Psoas muscle (tissue), 8 donors: ENCODE measurements at regions of chr5 and their contacts with region 1.

Region 1: DNA sequence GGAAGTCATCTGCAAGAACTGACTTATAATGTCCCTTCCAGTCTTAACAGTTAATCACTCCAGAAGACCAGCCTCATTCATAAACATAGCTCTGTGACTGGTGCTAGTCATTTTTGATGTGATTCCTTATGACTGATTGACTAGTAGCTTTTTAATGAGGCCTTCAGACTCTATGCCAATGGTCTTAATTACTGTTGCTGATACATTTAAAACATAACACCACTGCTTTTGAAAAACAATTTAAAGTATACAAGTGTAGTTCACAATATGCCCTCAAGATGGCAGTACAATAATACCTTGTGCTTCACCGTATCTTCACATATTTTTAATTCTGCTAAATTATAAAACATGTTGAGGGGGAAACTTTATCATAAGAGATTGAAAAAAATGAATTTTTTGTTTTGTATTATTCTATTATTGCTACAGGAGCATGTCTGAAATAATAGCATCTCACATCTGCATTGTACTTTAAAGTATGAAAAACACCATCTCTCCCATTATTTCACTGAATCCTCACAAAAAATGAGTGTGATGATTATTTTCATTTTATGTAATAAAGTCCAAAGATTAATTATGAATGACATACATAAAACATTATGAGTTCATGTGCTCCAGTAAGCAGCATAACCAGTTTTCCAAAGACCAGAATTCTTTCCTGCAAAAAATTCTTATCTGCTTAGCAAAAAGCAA is 55.2 kb upstream of the SHISAL2B start:
- DNase-seq: no peak
- ATAC-seq: peak in 2 of 4 donors; percentile 49 to 59
- H3K4me3 ChIP-seq: no peak overlapping the region
- H3K27ac ChIP-seq: no peak overlapping the region
- H3K4me1 ChIP-seq: no peaks in the 10 kb centered on the region
- H3K27me3 ChIP-seq: peaks cover 0 to 3% (median 0%) of the 10 kb centered on the region in 3 donors
- CTCF ChIP-seq: peak; percentile 89

Region 2: DNA sequence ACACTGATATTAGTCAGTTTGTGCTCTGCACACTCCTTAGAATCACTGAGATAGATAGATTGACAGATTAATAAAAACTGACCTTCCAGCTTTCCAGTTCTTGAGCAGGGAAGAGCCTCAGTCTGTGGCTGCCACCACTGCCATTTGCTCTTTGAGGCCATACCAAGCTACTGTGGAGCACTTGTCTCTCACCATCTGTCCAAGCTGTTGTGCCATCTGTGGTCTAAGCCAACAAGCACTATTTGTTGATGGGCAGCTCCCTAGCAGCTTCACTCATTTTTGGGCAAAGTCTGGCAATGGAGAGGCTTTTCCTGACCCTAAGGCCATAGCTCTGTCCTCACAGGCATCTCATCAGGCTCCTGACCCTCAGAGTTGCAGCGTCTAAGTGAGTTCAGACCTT is 703.3 kb before region 1 on chr5:
- intact Hi-C with region 1: no loop called
- DNase-seq: no peak
- ATAC-seq: no peak
- H3K4me3 ChIP-seq: no peak overlapping the region
- H3K27ac ChIP-seq: no peak overlapping the region
- H3K4me1 ChIP-seq: no peaks in the 10 kb centered on the region
- H3K27me3 ChIP-seq: no peaks in the 10 kb centered on the region
- CTCF ChIP-seq: no peak

Region 3: DNA sequence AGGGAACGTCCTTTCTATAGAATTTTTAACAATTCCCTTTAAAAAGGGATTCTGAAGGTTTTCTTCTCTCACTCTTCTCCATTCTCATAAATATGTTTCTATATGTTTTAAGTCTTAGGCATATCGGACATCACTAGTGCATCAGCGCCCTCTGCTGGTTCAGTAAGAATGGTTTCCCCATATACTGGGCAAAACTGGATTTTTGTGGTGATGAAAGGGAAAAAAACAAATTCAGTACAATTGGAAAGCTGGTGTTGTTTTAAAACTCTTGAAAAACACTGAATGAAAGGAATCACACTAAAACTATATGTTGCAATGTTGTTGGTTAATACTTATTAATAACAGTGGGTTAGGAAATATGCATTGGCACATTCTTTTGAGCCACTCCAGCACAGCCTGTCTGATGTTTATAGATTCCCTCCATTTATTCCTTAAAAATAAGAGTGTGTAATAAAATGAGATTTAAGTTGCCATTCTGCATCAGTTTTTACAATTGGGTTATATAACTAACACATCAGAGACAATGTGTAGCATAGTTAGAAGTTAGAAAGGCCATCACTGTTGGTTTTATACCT is 149.4 kb after region 1 on chr5:
- intact Hi-C with region 1: loop called (anchors 1 to 2 kb)
- DNase-seq: peak; percentile 54 to 59
- ATAC-seq: peak in 3 of 4 donors; percentile 67 to 81 (median 72)
- H3K4me3 ChIP-seq: no peak overlapping the region
- H3K27ac ChIP-seq: no peak overlapping the region
- H3K4me1 ChIP-seq: no peaks in the 10 kb centered on the region
- H3K27me3 ChIP-seq: no peaks in the 10 kb centered on the region
- CTCF ChIP-seq: peak; percentile 85